Calu3 (cell line): ENCODE measurements at regions of chr16 and their contacts with region 1.

Region 1: GRCh38 chr16:18983565-18984424 is at the start of gene TMC7:
- DNase-seq: peak; percentile 99
- H3K4me3 Mint-ChIP-seq: peak within 1 kb of the TSS; percentile 75
- H3K27ac Mint-ChIP-seq: peak within 1 kb of the TSS; percentile 70
- H3K4me1 Mint-ChIP-seq: peaks cover 14% of the 10 kb centered on the region
- H3K27me3 Mint-ChIP-seq: no peaks in the 10 kb centered on the region
- CTCF ChIP-seq: peak; percentile 92
- total RNA-seq, gene TMC7: 10.1 and 10.8 TPM in 2 replicates

Region 2: DNA sequence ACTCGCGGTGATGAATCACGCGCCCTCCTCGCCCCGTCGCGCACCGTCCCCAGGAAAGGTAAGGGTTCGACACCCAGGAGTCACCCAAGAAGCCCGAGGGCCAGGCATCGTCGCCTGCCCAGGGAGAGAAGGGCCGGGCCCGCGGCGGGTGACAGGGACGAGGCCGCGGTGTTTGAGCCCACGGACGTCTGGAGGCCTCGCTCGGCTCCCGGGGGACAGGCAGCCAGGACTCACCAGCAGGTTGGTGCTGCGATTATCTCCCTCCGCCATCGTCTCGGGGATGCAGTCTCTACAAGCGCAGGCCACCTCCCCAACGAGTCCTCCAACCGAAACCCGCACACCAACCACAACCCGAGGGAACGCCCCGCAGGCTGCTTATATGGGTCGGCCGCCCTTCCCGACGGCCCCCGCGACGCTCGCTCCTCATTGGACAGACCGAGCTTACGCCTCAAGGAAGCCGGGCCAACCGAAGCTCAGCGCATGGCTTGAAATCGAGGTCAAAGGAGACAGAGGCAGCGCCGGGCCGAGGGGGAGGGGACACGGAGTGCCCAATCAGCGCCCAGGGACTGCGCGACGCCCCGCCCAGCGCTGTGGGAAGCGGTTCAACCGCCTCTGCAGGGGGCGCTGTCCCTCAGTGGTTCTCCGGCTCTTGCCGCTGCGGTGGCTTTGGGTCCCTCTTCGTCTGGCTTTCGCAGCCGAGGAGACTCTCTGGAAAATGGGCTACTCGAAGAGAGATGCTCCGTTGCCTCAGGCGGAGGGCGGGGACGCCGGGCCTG is 182.4 kb before region 1 on chr16 and contains the start of gene ARL6IP1:
- CTCF ChIA-PET with region 1: interaction called, 10 read pairs
- intact Hi-C with region 1: no loop called
- DNase-seq: peak; percentile 99
- H3K4me3 Mint-ChIP-seq: peak within 1 kb of the TSS; percentile 98
- H3K27ac Mint-ChIP-seq: peak within 1 kb of the TSS; percentile 99
- H3K4me1 Mint-ChIP-seq: peaks cover 36% of the 10 kb centered on the region
- H3K27me3 Mint-ChIP-seq: no peaks in the 10 kb centered on the region
- CTCF ChIP-seq: peak; percentile 91
- total RNA-seq, gene ARL6IP1: 296 and 313 TPM in 2 replicates

Region 3: DNA sequence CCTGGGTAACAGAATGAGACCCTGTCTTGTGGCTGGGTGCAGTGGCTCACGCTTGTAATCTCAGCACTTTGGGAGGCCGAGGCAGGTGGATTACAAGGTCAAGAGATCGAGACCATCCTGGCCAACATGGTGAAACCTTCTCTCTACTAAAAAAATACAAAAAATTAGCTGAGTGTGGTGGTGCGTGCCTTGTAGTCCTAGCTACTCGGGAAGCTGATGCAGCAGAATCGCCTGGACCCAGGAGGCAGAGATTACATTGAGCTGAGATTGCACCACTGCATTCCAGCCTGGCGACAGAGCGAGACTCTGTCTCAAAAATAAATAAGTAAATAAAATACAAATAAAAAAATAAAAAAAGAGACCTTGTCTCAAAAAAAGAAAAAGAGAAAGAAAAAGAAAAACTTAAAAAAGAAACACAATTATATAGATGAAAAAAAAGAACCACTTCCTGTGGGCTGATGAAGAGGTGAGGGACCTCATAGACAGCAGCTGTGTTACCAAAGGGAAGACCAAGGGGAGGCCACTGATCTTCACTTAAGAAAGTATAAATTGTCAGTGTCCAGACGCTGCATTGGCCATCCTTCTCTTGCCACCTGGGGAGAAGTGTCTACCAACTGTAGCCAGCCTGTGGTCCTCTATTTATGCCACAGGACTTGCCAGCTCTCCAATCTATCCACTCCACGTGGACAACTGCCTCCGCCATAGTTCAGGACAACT is 33.2 kb before region 1 on chr16:
- CTCF ChIA-PET with region 1: no interaction called
- intact Hi-C with region 1: no loop called
- DNase-seq: no peak
- H3K4me3 Mint-ChIP-seq: no peak overlapping the region
- H3K27ac Mint-ChIP-seq: no peak overlapping the region
- H3K4me1 Mint-ChIP-seq: no peaks in the 10 kb centered on the region
- H3K27me3 Mint-ChIP-seq: no peaks in the 10 kb centered on the region
- CTCF ChIP-seq: no peak

Region 4: GRCh38 chr16:19005561-19006445 is 22.0 kb after region 1 on chr16:
- CTCF ChIA-PET with region 1: interaction called, 32 read pairs
- intact Hi-C with region 1: no loop called
- DNase-seq: peak; percentile 97
- H3K4me3 Mint-ChIP-seq: peak overlapping the region; percentile 43
- H3K27ac Mint-ChIP-seq: peak overlapping the region; percentile 98
- H3K4me1 Mint-ChIP-seq: peaks cover 52% of the 10 kb centered on the region
- H3K27me3 Mint-ChIP-seq: no peaks in the 10 kb centered on the region
- CTCF ChIP-seq: no peak

Region 5: DNA sequence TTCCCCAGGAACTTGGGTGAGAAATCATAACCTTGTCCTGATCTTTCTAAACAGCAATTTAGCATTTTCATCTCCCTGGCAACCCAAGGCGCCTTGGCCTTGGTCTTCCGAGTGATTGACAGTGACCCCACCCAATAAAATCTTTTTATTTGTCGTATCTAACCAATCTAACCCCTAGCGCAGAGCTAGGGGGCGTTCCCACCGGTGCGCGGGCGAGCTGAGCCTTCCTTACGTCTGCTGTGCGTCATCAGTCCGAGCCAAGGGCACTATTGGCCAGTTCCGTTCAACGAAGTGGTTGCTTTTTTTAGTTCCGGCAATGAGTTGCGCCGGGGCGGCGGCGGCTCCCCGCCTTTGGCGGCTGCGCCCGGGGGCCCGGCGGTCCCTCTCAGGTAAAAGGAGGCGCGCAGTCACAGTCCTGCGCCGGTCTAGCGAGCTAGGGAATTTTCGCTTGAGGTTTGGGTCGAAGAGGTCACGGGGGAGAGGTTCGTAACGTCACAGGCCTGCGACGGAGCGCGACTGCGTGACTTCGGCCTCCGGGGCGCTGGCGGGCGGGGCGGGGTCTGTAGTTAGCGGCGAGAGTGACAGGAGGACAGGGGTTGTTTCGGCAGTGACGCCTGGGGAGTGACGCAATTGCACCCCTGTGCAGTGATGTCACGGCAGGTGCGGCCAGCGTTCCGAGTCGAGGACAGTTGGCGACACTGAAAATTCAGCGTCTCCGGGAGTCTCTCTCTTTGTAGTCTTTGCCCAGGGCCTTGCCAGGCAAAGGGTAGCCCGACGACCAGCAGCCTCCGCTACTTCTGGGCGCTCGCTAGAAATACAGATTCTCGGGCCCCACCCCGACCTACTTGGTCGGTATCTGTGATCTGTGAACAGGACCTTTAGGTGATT is 83.8 kb after region 1 on chr16 and contains the start of gene COQ7:
- CTCF ChIA-PET with region 1: interaction called, 8 read pairs
- intact Hi-C with region 1: loop called (anchors 1 kb)
- DNase-seq: peak; percentile 99
- H3K4me3 Mint-ChIP-seq: peak within 1 kb of the TSS; percentile 93
- H3K27ac Mint-ChIP-seq: peak within 1 kb of the TSS; percentile 100
- H3K4me1 Mint-ChIP-seq: peaks cover 18% of the 10 kb centered on the region
- H3K27me3 Mint-ChIP-seq: no peaks in the 10 kb centered on the region
- CTCF ChIP-seq: no peak
- total RNA-seq, gene COQ7: 24.3 and 28.5 TPM in 2 replicates

Region 6: DNA sequence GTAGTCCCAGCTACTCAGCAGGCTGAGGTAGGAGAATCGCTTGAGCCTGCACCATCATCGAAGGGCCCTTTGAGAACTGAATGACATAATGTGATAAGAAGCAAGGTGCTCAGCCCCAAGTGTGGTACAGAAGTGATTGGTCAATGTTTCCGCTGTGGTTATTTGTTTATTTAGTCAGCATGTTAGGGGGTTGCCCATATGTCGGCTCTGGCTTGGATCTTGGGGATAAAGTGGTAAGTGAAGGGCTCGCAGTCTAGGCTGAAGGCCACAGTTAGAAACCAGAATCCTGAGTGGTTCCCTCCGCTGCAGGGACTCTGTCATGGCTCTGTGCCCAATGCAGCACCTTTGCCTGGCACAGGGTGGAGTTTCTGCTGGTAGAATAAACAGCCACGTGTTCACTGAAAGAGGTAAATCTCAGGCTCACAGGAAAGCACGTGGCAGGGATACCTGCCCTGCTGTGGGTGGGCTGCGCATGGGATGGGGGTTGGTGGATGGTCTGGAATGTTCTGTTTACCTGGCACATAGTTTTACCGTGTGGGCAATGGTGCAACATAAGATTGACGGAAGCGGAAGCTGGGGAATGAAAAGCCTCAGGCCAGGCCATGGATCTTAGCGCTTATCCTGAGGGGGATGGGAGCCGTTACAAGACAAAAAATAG is 219.7 kb after region 1 on chr16:
- CTCF ChIA-PET with region 1: no interaction called
- intact Hi-C with region 1: no loop called
- DNase-seq: no peak
- H3K4me3 Mint-ChIP-seq: no peak overlapping the region
- H3K27ac Mint-ChIP-seq: no peak overlapping the region
- H3K4me1 Mint-ChIP-seq: peaks cover 8% of the 10 kb centered on the region
- H3K27me3 Mint-ChIP-seq: no peaks in the 10 kb centered on the region
- CTCF ChIP-seq: no peak

Region 7: DNA sequence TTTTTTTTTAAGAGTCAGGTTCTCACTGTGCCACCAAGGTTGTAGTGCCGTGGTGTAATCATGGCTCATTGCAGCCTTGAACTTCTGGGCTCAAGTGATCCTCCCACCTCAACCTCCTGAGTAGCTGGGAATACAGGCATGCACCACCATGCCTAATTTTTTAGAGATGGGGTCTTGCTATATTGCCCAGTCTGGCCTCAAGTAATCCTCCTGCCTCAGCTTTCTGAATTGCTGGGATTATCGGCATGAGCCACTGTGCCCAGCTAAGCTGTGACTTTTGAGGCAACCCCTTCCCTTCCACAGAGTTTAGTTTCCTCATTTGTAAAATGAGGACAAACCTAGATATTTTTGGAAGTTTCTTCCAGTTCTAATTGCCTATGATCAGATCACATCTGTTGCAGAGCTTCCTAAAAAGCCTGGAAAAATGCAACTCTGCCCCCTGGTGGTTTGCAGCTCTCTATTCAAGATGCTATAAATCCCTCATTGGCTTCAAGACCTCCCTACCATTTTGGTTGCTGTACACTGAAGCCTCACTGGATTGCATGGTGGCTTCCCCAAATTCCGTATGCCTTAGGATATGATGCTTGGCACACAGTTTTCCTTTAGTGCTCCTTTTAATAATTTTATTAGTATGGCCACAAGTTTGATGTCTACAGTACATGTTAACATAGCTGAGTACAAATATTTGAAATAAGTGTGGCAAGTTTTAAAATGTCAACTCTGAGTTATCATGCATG is 518.8 kb after region 1 on chr16:
- CTCF ChIA-PET with region 1: no interaction called
- intact Hi-C with region 1: loop called (anchors 10 kb)
- DNase-seq: peak; percentile 88
- H3K4me3 Mint-ChIP-seq: no peak overlapping the region
- H3K27ac Mint-ChIP-seq: no peak overlapping the region
- H3K4me1 Mint-ChIP-seq: peaks cover 15% of the 10 kb centered on the region
- H3K27me3 Mint-ChIP-seq: no peaks in the 10 kb centered on the region
- CTCF ChIP-seq: peak; percentile 79